ENCODE measurements at regions of chr4 and their contacts with region 1.

Region 1: DNA sequence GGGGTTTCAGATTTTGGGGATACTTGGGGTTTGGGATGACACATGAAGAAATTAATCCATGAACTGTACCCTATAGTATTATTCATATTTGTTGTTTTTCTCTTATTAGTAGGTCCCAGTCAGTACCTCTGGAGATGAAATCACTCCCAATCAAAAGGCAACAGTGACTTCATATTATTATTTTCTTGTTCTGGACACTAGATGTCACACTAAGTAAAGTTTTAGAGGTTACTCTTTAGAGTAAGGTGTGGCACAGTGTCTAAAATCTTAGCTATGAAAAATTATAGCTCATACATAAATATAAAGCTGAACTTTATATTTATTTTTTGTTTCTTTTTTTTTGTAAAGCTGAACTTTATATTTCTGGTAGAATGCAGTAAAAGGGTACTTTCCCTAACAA is 35.1 kb downstream of the FAM114A1 start:
- DNase-seq: peak; percentile 67
- ATAC-seq: peak; percentile 73
- H3K4me3 ChIP-seq: no peak overlapping the region
- H3K4me3 Mint-ChIP-seq: no peak overlapping the region
- H3K27ac ChIP-seq: no peak overlapping the region
- H3K27ac Mint-ChIP-seq: no peak overlapping the region
- H3K4me1 ChIP-seq: no peaks in the 10 kb centered on the region
- H3K4me1 Mint-ChIP-seq: peaks cover 6% of the 10 kb centered on the region
- H3K27me3 ChIP-seq: no peaks in the 10 kb centered on the region
- H3K27me3 Mint-ChIP-seq: no peaks in the 10 kb centered on the region
- CTCF ChIP-seq: peak; percentile 73

Region 2: DNA sequence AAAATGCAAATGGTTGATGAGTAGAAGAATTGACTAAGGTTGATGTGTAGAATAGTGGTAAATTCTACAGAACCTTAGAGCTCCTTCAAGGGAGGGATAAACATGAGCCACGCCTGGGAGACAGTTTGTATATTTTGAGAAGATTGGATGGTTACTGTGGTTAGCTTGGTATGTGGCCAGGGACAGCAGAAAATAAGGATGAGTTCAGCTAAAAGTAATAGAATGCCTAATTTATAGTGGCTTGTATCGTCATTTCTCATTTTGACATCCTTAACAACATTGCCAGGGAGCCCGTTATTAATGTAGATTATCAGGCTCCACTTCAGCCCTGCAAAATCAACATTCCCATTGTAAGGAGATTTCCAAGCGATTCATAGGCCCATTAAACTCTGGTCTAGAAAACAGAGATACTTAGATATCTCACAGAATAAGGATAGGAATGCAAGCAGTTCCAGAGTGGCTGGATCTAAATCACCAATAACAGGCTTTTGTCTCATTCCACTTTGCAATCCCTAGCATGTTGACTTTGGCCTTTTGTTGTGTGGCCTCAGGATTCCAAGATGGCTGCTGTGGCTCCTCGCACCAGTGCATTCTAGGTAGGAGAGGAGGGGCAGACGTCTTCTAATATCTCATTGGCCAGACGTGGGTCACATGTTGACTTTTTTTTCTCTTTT is 948.9 kb before region 1 on chr4:
- CTCF ChIA-PET with region 1: no interaction called
- POLR2A ChIA-PET with region 1: no interaction called
- intact Hi-C with region 1: no loop called
- DNase-seq: no peak
- ATAC-seq: no peak
- H3K4me3 ChIP-seq: no peak overlapping the region
- H3K4me3 Mint-ChIP-seq: no peak overlapping the region
- H3K27ac ChIP-seq: no peak overlapping the region
- H3K27ac Mint-ChIP-seq: no peak overlapping the region
- H3K4me1 ChIP-seq: peaks cover 0 to 13% of the 10 kb centered on the region in 2 donors
- H3K4me1 Mint-ChIP-seq: peaks cover 14% of the 10 kb centered on the region
- H3K27me3 ChIP-seq: no peaks in the 10 kb centered on the region
- H3K27me3 Mint-ChIP-seq: no peaks in the 10 kb centered on the region
- CTCF ChIP-seq: no peak

Region 3: DNA sequence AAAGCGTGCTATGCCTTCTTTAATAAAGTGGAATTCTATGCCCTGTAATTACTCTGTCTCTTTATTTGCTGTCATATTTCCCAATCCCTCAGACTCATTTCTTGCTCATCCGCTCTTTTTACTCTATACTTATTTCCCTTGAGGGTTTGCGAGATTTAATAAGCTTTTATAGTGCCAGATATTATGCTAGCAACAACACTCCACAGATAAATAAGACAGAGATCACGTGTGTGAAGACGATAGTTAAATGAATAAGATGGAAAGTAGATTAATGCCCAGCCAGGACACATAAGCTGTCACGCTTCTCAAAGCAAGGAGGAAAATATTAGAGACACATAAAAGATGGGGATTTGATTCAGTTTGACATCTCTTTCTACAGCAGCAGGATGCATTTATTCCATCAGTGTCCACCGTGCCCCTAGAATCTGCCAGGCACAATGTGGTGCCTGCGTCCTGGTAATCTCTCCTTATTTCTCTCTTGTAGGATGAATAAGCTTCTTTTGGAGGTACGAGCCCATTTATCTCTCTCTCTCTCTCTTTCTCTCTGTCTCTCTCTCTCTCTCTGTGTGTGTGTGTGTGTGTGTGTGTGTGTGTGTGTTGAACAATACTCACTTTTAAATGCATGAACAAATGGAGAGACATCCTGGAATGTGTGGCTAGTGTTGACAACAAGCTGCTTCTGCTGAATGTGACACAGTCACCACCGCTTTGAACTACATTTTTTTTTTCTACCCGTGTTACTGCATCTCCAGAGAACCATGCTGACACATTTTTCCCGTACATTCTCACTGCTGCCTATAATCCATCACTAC is 81.3 kb after region 1 on chr4:
- CTCF ChIA-PET with region 1: interaction called, 22 read pairs
- POLR2A ChIA-PET with region 1: no interaction called
- intact Hi-C with region 1: no loop called
- DNase-seq: no peak
- ATAC-seq: no peak
- H3K4me3 ChIP-seq: no peak overlapping the region
- H3K4me3 Mint-ChIP-seq: peak overlapping the region; percentile 21
- H3K27ac ChIP-seq: peak overlapping the region in 1 of 2 donors; percentile 86
- H3K27ac Mint-ChIP-seq: peak overlapping the region; percentile 42
- H3K4me1 ChIP-seq: peaks cover 35 to 37% of the 10 kb centered on the region in 2 donors
- H3K4me1 Mint-ChIP-seq: peaks cover 53% of the 10 kb centered on the region
- H3K27me3 ChIP-seq: no peaks in the 10 kb centered on the region
- H3K27me3 Mint-ChIP-seq: no peaks in the 10 kb centered on the region
- CTCF ChIP-seq: no peak

Region 4: DNA sequence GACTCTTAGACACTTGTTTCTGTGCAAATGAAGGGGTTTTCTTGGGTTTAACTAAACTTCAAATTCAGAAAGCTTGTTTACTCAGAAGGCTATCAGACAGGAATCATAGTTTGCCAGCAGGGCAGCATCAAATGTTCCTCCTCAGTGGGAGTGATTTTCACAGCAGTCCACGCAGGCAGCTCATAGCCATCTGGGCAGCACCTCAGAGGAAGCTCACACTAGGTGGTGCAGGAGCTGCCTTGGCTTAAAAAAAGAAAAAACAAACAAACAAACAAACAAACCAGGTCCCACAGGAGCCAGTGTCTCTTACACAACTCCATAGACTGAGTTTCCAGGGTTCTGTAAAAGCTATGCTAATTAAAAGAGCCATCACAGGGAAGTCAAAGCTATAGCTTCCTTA is 148.8 kb after region 1 on chr4:
- CTCF ChIA-PET with region 1: interaction called, 55 read pairs
- POLR2A ChIA-PET with region 1: no interaction called
- intact Hi-C with region 1: loop called (anchors 5 kb)
- DNase-seq: no peak
- ATAC-seq: no peak
- H3K4me3 ChIP-seq: no peak overlapping the region
- H3K4me3 Mint-ChIP-seq: no peak overlapping the region
- H3K27ac ChIP-seq: peak overlapping the region in 1 of 2 donors; percentile 38
- H3K27ac Mint-ChIP-seq: no peak overlapping the region
- H3K4me1 ChIP-seq: peaks cover 39 to 46% of the 10 kb centered on the region in 2 donors
- H3K4me1 Mint-ChIP-seq: peaks cover 77% of the 10 kb centered on the region
- H3K27me3 ChIP-seq: no peaks in the 10 kb centered on the region
- H3K27me3 Mint-ChIP-seq: no peaks in the 10 kb centered on the region
- CTCF ChIP-seq: no peak

Region 5: GRCh38 chr4:39097290-39097689 is 194.6 kb after region 1 on chr4:
- CTCF ChIA-PET with region 1: interaction called, 16 read pairs
- POLR2A ChIA-PET with region 1: no interaction called
- intact Hi-C with region 1: no loop called
- DNase-seq: no peak
- ATAC-seq: no peak
- H3K4me3 ChIP-seq: no peak overlapping the region
- H3K4me3 Mint-ChIP-seq: no peak overlapping the region
- H3K27ac ChIP-seq: no peak overlapping the region
- H3K27ac Mint-ChIP-seq: no peak overlapping the region
- H3K4me1 ChIP-seq: no peaks in the 10 kb centered on the region
- H3K4me1 Mint-ChIP-seq: peaks cover 1% of the 10 kb centered on the region
- H3K27me3 ChIP-seq: no peaks in the 10 kb centered on the region
- H3K27me3 Mint-ChIP-seq: no peaks in the 10 kb centered on the region
- CTCF ChIP-seq: no peak

Region 6: DNA sequence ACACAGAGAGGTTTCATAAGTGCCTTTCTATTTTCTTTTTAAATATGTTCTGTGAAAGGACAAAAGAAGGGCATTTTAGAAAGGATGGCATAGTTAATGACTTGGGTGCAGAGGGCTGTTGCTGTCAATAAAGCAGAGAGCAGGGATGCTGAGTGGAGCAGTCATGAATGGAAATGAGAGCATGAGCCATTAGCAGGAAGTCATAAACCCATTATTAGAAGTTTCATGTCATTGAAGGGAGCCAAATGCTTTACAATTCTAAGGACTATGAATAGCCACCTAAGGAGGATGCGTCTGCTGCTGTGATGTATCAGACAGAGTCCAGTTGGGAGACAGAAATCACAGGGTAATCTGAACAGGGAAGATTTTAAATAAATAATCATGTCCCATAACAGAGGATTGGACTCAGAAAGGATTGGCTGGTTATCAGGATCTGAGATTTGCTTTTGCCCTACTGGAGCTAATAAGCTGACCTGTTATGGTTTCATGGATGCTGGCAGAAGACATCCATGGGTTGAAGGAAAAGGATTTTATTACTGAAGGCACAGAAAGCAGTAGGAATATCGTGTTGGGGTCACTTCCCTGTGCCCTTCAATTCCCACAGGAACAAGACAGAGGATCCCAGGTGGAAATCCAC is 232.1 kb after region 1 on chr4:
- CTCF ChIA-PET with region 1: interaction called, 258 read pairs
- POLR2A ChIA-PET with region 1: interaction called, 4 read pairs
- intact Hi-C with region 1: loop called (anchors 1 kb)
- DNase-seq: no peak
- ATAC-seq: no peak
- H3K4me3 ChIP-seq: no peak overlapping the region
- H3K4me3 Mint-ChIP-seq: no peak overlapping the region
- H3K27ac ChIP-seq: no peak overlapping the region
- H3K27ac Mint-ChIP-seq: peak overlapping the region; percentile 54
- H3K4me1 ChIP-seq: peaks cover 6 to 12% of the 10 kb centered on the region in 2 donors
- H3K4me1 Mint-ChIP-seq: peaks cover 14% of the 10 kb centered on the region
- H3K27me3 ChIP-seq: no peaks in the 10 kb centered on the region
- H3K27me3 Mint-ChIP-seq: no peaks in the 10 kb centered on the region
- CTCF ChIP-seq: no peak

Region 7: DNA sequence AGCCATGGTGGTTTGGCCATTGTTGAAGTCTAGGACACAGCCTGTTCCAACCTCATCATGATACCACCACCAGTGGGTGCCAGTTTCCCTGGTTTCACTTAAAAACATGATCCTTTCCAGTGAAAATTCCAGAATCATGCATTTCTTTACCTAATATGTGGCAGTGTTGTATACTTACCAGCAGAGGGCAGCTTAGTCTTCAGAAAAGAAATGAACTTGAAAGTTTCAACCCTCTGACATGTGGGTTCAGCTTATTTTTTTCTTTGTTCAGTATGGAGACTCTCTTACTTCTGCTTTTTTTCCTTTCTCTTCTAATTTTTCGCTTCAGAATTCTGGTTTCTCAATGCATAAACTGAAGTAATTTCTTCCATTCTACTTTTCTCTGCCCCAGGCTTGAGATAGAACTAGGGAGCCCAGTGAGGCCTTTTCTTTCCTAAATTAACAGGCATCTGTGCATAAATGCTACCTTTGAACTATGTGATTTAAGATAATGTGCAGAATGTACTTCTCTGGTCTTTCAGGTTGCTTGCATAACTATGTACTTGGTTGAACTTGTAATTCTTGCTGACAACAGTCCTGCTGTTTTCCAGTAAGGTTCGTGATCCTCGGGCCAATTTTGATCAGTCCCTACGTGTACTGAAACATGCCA is 566.9 kb after region 1 on chr4:
- CTCF ChIA-PET with region 1: no interaction called
- POLR2A ChIA-PET with region 1: no interaction called
- intact Hi-C with region 1: no loop called
- DNase-seq: peak; percentile 81
- ATAC-seq: peak; percentile 99
- H3K4me3 ChIP-seq: peak overlapping the region in 1 of 5 experiments; percentile 14
- H3K4me3 Mint-ChIP-seq: peak overlapping the region; percentile 59
- H3K27ac ChIP-seq: peak overlapping the region; percentile 36 to 68
- H3K27ac Mint-ChIP-seq: peak overlapping the region; percentile 92
- H3K4me1 ChIP-seq: peaks cover 5 to 7% of the 10 kb centered on the region in 2 donors
- H3K4me1 Mint-ChIP-seq: peaks cover 9% of the 10 kb centered on the region
- H3K27me3 ChIP-seq: no peaks in the 10 kb centered on the region
- H3K27me3 Mint-ChIP-seq: no peaks in the 10 kb centered on the region
- CTCF ChIP-seq: peak; percentile 87